Activated CD8-positive, alpha-beta T cell treated with anti-CD3 and anti-CD28 coated beads for 36 hours (primary cell): ENCODE measurements at regions of chr13 and their contacts with region 1.

Region 1: GRCh38 chr13:46553886-46554858 is 1.2 kb downstream of the LRCH1 start:
- DNase-seq: peak; percentile 82
- ATAC-seq: peak; percentile 57
- H3K4me3 Mint-ChIP-seq: peak overlapping the region; percentile 90
- H3K27ac Mint-ChIP-seq: peak overlapping the region; percentile 91
- H3K4me1 Mint-ChIP-seq: peaks cover 48% of the 10 kb centered on the region
- H3K27me3 Mint-ChIP-seq: peaks cover 2% of the 10 kb centered on the region
- CTCF ChIP-seq: no peak

Region 2: DNA sequence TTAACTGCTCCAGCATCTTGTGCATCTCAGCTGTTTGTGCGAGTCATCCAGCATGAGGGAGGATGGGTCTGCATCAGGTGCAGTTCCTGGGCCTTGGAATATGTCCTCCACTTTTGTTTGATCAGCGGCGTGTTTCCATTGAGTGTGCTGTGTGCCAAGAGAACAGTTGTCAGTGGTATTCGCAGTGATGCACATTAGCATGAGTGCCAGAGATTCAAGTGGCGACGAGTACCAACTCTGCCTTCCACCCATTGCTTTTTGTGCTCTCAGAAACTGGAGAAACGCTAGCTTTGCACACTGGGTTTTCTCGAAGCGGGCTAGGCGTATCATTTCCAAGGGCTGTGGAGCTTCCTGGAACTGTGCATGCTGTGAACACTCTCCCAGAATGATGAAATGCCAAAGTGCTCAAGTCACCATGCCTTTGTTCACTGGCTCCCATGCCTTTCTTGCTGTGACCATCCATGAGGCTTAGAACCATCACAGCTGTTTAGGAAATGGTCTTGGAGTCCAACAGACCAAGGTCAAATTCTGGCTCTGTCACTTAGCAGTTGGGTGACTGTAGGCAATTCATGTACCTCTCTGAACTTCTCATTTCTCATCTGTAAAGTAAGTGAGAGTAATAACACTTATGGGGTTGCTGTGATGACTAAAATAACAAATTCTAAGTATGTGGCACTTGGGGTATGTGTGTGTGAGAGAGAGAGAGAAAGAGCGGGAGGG is 17.2 kb after region 1 on chr13:
- CTCF ChIA-PET with region 1: interaction called, 16 read pairs
- POLR2A ChIA-PET with region 1: interaction called, 4 read pairs
- intact Hi-C with region 1: no loop called
- DNase-seq: no peak
- ATAC-seq: peak; percentile 55
- H3K4me3 Mint-ChIP-seq: no peak overlapping the region
- H3K27ac Mint-ChIP-seq: no peak overlapping the region
- H3K4me1 Mint-ChIP-seq: peaks cover 36% of the 10 kb centered on the region
- H3K27me3 Mint-ChIP-seq: no peaks in the 10 kb centered on the region
- CTCF ChIP-seq: no peak

Region 3: DNA sequence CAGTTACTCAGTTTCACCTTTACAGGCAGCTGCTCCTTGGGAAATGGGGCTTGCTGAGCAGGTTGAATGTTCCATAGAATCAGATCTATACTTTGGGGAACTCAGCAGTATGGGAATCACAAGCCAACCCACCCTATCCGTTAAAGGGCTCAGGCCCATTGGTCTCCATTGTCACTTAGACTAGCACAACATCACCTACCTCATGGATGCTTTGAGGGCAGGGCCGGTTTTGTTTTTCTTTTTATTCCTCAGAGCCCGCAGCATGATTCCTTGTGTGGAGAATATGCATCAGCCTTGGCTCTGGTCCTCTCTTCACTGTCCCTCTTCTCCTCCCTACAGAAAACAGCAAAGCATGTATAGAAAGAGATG is 46.8 kb after region 1 on chr13:
- CTCF ChIA-PET with region 1: interaction called, 37 read pairs
- POLR2A ChIA-PET with region 1: interaction called, 3 read pairs
- intact Hi-C with region 1: no loop called
- DNase-seq: no peak
- ATAC-seq: no peak
- H3K4me3 Mint-ChIP-seq: no peak overlapping the region
- H3K27ac Mint-ChIP-seq: no peak overlapping the region
- H3K4me1 Mint-ChIP-seq: peaks cover 73% of the 10 kb centered on the region
- H3K27me3 Mint-ChIP-seq: no peaks in the 10 kb centered on the region
- CTCF ChIP-seq: no peak

Region 4: GRCh38 chr13:46655377-46656180 is 101.4 kb after region 1 on chr13:
- CTCF ChIA-PET with region 1: interaction called, 17 read pairs
- POLR2A ChIA-PET with region 1: no interaction called
- intact Hi-C with region 1: no loop called
- DNase-seq: no peak
- ATAC-seq: no peak
- H3K4me3 Mint-ChIP-seq: no peak overlapping the region
- H3K27ac Mint-ChIP-seq: peak overlapping the region; percentile 64
- H3K4me1 Mint-ChIP-seq: peaks cover 41% of the 10 kb centered on the region
- H3K27me3 Mint-ChIP-seq: no peaks in the 10 kb centered on the region
- CTCF ChIP-seq: no peak

Region 5: GRCh38 chr13:46687810-46688209 is 133.6 kb after region 1 on chr13:
- CTCF ChIA-PET with region 1: interaction called, 30 read pairs
- POLR2A ChIA-PET with region 1: no interaction called
- intact Hi-C with region 1: loop called (anchors 5 kb)
- DNase-seq: peak; percentile 44
- ATAC-seq: peak; percentile 74
- H3K4me3 Mint-ChIP-seq: no peak overlapping the region
- H3K27ac Mint-ChIP-seq: peak overlapping the region; percentile 15
- H3K4me1 Mint-ChIP-seq: peaks cover 20% of the 10 kb centered on the region
- H3K27me3 Mint-ChIP-seq: no peaks in the 10 kb centered on the region
- CTCF ChIP-seq: no peak

Region 6: DNA sequence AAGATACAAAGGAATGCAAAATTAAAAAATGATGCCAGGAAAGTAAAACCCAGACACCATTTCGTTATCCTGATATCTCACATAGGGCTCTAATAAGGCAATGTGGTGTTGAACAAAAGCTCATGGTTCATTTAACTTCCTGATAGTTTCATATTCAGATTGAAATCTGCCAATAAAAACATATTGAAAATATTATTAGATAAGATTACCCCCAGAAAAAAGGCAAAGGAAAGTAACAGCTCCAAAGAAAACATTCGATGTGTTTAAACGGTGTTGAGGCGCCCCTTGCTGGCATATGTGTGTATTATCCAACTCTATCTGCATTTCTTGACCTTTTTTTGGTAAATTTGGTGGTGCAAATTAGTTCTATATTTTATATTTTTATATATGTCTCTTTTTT is 166.9 kb after region 1 on chr13:
- CTCF ChIA-PET with region 1: interaction called, 149 read pairs
- POLR2A ChIA-PET with region 1: no interaction called
- intact Hi-C with region 1: loop called (anchors 2 kb)
- DNase-seq: peak; percentile 65
- ATAC-seq: peak; percentile 53
- H3K4me3 Mint-ChIP-seq: no peak overlapping the region
- H3K27ac Mint-ChIP-seq: no peak overlapping the region
- H3K4me1 Mint-ChIP-seq: no peaks in the 10 kb centered on the region
- H3K27me3 Mint-ChIP-seq: no peaks in the 10 kb centered on the region
- CTCF ChIP-seq: peak; percentile 85